A549 (cell line): ENCODE measurements at regions of chr19 and their contacts with region 1.

Region 1: GRCh38 chr19:50556282-50557008 is 11.8 kb downstream of the LRRC4B start:
- DNase-seq: peak; percentile 88 to 98
- ATAC-seq: peak; percentile 78 to 92
- H3K4me3 ChIP-seq: peak overlapping the region; percentile 64
- H3K27ac ChIP-seq: peak overlapping the region; percentile 80 to 89
- H3K4me1 ChIP-seq: peaks cover 14% of the 10 kb centered on the region
- CTCF ChIP-seq: peak; percentile 100
- EP300 ChIP-seq: no peak
- POLR2A ChIP-seq: peak; percentile 38
- RAD21 ChIP-seq: peak; percentile 44 to 61

Region 2: GRCh38 chr19:50511068-50511822 is 45.2 kb before region 1 on chr19 and contains the start of gene JOSD2:
- CTCF ChIA-PET with region 1: interaction called, 28 read pairs
- POLR2A ChIA-PET with region 1: interaction called, 3 read pairs
- DNase-seq: peak; percentile 99 to 100
- ATAC-seq: peak; percentile 80 to 94
- H3K4me3 ChIP-seq: peak within 1 kb of the TSS; percentile 76
- H3K27ac ChIP-seq: peak within 1 kb of the TSS; percentile 91 to 92
- H3K4me1 ChIP-seq: peaks cover 12% of the 10 kb centered on the region; the same call in 2 of the 3 replicates
- CTCF ChIP-seq: no peak
- EP300 ChIP-seq: no peak
- POLR2A ChIP-seq: peak; percentile 65
- RAD21 ChIP-seq: no peak
- polyA plus RNA-seq, gene JOSD2: 19.3 and 24.2 TPM in 2 replicates

Region 3: DNA sequence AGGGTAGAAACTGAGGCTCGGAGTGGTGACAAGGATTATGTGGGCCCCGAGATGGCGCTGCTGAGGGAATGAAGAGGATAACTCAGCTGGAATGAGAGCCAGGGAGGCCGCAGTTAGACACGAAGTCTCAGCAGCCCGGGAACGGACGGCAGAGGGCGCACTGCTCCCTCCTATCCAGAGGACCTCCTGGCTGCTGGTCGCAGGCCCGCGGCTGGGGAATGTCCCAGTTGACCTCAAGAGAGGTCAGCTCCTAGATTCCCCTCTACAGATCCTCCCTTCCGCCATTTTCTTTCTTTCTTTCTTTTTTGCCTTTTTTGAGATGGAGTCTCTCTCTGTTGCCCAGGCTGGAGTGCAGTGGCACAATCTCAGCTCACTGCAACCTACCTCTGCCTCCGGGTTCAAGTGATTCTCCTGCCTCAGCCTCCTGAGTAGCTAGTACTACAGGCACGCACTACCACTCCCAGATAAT is 18.6 kb before region 1 on chr19:
- CTCF ChIA-PET with region 1: interaction called, 355 read pairs
- POLR2A ChIA-PET with region 1: interaction called, 9 read pairs
- DNase-seq: peak; percentile 95 to 98
- ATAC-seq: peak; percentile 90 to 98
- H3K4me3 ChIP-seq: no peak overlapping the region
- H3K27ac ChIP-seq: no peak overlapping the region
- H3K4me1 ChIP-seq: no peaks in the 10 kb centered on the region
- CTCF ChIP-seq: peak; percentile 98
- EP300 ChIP-seq: no peak
- POLR2A ChIP-seq: no peak
- RAD21 ChIP-seq: peak; percentile 87

Region 4: GRCh38 chr19:50590191-50590590 is 33.7 kb after region 1 on chr19:
- CTCF ChIA-PET with region 1: interaction called, 58 read pairs
- POLR2A ChIA-PET with region 1: no interaction called
- DNase-seq: no peak
- ATAC-seq: no peak
- H3K4me3 ChIP-seq: no peak overlapping the region
- H3K27ac ChIP-seq: no peak overlapping the region
- H3K4me1 ChIP-seq: no peaks in the 10 kb centered on the region
- CTCF ChIP-seq: no peak
- EP300 ChIP-seq: no peak
- POLR2A ChIP-seq: no peak
- RAD21 ChIP-seq: no peak

Region 5: DNA sequence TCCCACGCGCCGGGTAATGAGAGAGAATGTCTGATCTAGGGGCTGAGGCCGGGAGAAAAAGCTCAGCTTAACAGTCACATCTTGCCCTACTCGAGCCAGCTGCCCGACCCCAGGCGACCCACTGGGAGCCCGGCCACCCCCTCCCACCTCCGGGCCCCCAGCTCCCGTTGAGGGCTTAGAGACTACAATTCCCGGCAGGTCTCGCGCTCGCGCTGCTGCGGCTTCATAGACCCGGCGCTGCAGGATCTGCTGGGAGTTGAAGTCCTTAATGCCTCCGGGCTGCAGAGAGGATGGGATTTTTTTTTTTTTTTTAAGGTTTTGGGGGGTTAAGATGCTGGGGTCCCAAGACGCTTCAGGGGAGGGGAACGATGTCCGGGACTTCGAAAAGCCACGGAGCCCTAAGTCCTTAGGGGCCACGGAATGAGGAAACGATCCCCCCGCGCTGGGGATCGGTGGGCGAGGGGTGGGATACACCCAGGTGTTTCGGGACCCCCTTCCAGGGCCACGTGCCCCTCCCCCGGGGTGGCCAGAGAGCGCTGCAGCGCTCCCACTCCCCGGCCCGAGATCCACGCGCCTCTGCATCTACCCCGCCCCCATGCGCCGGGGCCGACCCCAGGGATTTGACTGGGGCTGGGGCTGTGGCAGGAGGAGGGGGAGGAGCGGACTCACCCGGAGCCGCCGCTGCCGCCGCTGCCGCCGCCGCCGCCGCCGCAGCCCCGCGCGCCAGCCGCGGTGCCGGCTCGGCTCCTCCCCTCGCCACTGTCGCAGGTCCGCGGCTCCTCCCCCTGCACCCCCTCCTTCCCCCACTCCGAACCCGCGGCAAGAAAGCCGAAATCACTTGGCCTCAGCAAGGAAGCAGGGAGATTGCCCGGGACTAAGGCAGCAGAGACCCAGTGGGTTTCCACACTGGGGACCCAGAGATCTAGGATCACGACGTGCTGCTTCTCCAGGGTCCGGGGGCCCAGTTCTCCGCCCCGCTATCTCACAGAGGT is 83.0 kb after region 1 on chr19 and contains the start of gene SYT3:
- CTCF ChIA-PET with region 1: interaction called, 10 read pairs
- POLR2A ChIA-PET with region 1: no interaction called
- DNase-seq: peak; percentile 55 to 95
- ATAC-seq: peak; percentile 87 to 92
- H3K4me3 ChIP-seq: peak within 1 kb of the TSS; percentile 74
- H3K27ac ChIP-seq: peak within 1 kb of the TSS; percentile 70 to 90
- H3K4me1 ChIP-seq: peaks cover 4% of the 10 kb centered on the region; the same call in 1 of the 3 replicates
- CTCF ChIP-seq: no peak
- EP300 ChIP-seq: no peak
- POLR2A ChIP-seq: no peak
- RAD21 ChIP-seq: no peak
- polyA plus RNA-seq, gene SYT3: 0.25 and 0.29 TPM in 2 replicates